Natural killer cell (primary cell): ENCODE measurements at regions of chr7 and their contacts with region 1.

Region 1: DNA sequence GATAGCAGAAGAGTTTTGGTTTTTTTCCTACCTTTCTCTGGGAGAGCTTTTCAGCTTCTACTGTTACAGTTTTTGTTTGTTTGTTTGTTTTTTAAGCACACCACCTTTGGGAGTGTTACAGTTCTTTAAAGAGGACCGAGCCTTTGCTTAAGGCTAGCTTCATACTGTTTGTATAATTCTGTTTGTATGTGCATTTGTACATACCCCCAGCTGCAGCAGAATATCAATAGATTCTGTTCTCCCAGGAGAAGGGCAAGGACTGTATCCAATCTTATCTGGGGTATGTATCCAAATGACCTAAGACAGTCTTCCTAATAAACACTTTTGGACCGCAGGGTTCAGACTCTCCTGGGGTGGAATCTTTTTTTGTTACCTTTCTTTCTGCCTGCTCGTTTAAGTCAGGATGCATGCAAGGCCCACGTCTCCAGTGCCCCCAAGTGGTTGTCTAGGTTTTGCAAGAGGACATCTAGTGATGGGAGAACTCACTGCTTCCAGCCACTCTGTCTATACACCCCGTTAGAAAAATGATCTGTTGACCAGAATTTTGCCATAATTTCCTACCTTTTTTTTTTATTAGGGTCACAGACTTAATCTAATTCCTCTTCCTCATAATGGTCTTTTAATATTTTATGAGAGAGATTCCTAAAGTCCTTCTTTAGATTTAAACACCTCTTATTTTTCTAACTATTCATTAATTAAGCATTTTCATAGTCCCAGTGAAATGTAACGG is 23.9 kb downstream of the NRF1 start:
- DNase-seq: peak; percentile 52 to 84
- ATAC-seq: peak; percentile 89 to 98 (median 96)
- H3K4me3 ChIP-seq: no peak overlapping the region
- H3K4me3 Mint-ChIP-seq: no peak overlapping the region
- H3K27ac ChIP-seq: no peak overlapping the region
- H3K27ac Mint-ChIP-seq: peak overlapping the region; percentile 5 to 72
- H3K4me1 ChIP-seq: peaks cover 6% of the 10 kb centered on the region
- H3K4me1 Mint-ChIP-seq: peaks cover 32 to 40% of the 10 kb centered on the region in 2 donors
- H3K27me3 ChIP-seq: no peaks in the 10 kb centered on the region
- H3K27me3 Mint-ChIP-seq: no peaks in the 10 kb centered on the region
- CTCF ChIP-seq: peak; percentile 95

Region 2: GRCh38 chr7:129367700-129368388 is 267.6 kb before region 1 on chr7:
- intact Hi-C with region 1: loop called (anchors 1 kb)
- DNase-seq: peak; percentile 62 to 86
- ATAC-seq: peak; percentile 78 to 82 (median 78)
- H3K4me3 ChIP-seq: no peak overlapping the region
- H3K4me3 Mint-ChIP-seq: peak overlapping the region; percentile 73
- H3K27ac ChIP-seq: peak overlapping the region; percentile 28
- H3K27ac Mint-ChIP-seq: peak overlapping the region; percentile 14 to 81
- H3K4me1 ChIP-seq: peaks cover 14% of the 10 kb centered on the region
- H3K4me1 Mint-ChIP-seq: peaks cover 19 to 23% of the 10 kb centered on the region in 2 donors
- H3K27me3 ChIP-seq: no peaks in the 10 kb centered on the region
- H3K27me3 Mint-ChIP-seq: peaks cover 0 to 2% of the 10 kb centered on the region in 2 donors
- CTCF ChIP-seq: peak; percentile 93

Region 3: DNA sequence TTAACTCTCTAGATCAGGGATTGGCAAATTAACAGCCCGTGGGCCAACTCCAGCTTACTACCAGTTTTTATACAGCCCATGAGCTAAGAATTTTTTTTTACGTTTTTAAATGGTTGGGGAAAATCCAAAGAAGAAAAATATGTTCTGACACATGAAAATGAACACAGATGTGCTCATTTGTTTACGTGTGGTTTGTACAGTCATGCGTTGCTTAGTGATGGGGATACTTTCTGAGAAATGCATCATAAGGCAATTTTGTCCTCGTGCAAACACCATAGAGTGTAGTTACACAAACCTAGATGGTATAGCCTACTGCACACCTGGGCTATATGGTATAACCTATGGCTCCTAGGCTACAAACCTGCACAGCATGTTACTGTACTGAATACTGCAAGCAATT is 141.4 kb before region 1 on chr7:
- intact Hi-C with region 1: loop called (anchors 5 kb)
- DNase-seq: peak in 1 of 2 donors; percentile 44
- ATAC-seq: no peak
- H3K4me3 ChIP-seq: no peak overlapping the region
- H3K4me3 Mint-ChIP-seq: no peak overlapping the region
- H3K27ac ChIP-seq: peak overlapping the region; percentile 48
- H3K27ac Mint-ChIP-seq: no peak overlapping the region
- H3K4me1 ChIP-seq: peaks cover 9% of the 10 kb centered on the region
- H3K4me1 Mint-ChIP-seq: peaks cover 17 to 18% of the 10 kb centered on the region in 2 donors
- H3K27me3 ChIP-seq: no peaks in the 10 kb centered on the region
- H3K27me3 Mint-ChIP-seq: peaks cover 0 to 3% of the 10 kb centered on the region in 2 donors
- CTCF ChIP-seq: no peak

Region 4: GRCh38 chr7:129611246-129612111 is 24.0 kb before region 1 on chr7 and contains the start of gene NRF1:
- intact Hi-C with region 1: loop called (anchors 1 kb)
- DNase-seq: peak; percentile 92 to 95
- ATAC-seq: peak; percentile 79 to 94 (median 87)
- H3K4me3 ChIP-seq: peak within 1 kb of the TSS; percentile 93
- H3K4me3 Mint-ChIP-seq: peak within 1 kb of the TSS; percentile 97
- H3K27ac ChIP-seq: peak within 1 kb of the TSS; percentile 91
- H3K27ac Mint-ChIP-seq: peak within 1 kb of the TSS; percentile 95 to 96
- H3K4me1 ChIP-seq: peaks cover 42% of the 10 kb centered on the region
- H3K4me1 Mint-ChIP-seq: peaks cover 48 to 71% of the 10 kb centered on the region in 2 donors
- H3K27me3 ChIP-seq: no peaks in the 10 kb centered on the region
- H3K27me3 Mint-ChIP-seq: no peaks in the 10 kb centered on the region
- CTCF ChIP-seq: no peak
- total RNA-seq, gene NRF1: 39.8 to 43.5 (median 40.1) TPM

Region 5: DNA sequence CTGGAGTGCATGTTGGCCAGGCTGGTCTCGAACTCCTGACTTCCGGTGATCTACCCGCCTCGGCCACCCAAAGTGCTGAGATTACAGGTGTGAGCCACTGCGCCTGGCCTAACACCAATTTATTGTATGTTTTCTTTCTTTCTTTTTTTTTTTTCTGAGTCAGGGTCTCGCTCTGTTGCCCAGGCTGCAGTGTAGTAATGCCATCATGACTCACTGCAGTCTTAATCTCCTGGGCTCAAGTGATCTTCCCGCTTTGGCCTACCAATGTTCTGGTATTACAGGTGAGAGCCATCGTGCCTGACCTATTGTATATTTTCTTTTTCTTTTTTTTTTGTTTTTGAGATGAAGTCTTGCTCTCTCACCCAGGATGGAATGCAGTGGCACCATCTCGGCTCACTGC is 351.1 kb after region 1 on chr7:
- intact Hi-C with region 1: no loop called
- DNase-seq: no peak
- ATAC-seq: no peak
- H3K4me3 ChIP-seq: no peak overlapping the region
- H3K4me3 Mint-ChIP-seq: no peak overlapping the region
- H3K27ac ChIP-seq: no peak overlapping the region
- H3K27ac Mint-ChIP-seq: no peak overlapping the region
- H3K4me1 ChIP-seq: no peaks in the 10 kb centered on the region
- H3K4me1 Mint-ChIP-seq: no peaks in the 10 kb centered on the region
- H3K27me3 ChIP-seq: no peaks in the 10 kb centered on the region
- H3K27me3 Mint-ChIP-seq: peaks cover 0 to 9% of the 10 kb centered on the region in 2 donors
- CTCF ChIP-seq: no peak